Prostate gland (tissue), 2 donors: ENCODE measurements at regions of chr1 and their contacts with region 1.

Region 1: DNA sequence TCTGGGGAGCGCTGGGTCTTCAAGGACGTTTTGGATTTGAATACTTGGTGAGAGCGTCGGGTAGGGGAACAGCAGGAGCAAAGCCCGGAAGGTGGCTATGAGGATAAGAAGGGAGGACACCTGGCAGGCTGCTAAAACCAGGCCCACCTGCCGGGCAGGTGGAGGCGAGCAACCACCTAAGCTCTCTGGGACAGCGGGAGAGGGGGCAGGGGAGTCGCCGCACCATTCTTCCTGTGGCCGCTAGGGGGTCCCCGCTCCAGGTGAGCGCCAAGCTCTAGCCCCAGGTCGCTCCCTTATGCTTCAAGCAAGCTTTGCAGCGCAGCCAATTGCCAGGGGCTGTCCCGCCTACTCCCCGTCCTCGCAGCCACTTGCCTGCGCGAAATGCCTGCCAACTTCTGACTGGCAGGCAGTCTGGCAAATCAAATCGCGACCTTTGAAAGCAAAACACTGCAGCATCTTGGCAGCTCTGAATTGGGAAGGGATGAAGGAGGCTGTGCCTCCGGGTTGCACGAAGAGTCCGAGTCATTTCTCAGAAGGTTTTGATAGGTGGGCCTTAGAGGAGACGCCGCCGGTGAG is at the start of gene NIPAL3:
- DNase-seq: peak; percentile 98
- H3K4me3 ChIP-seq: peak within 1 kb of the TSS; percentile 54 to 57
- H3K27ac ChIP-seq: peak within 1 kb of the TSS; percentile 66 to 82
- H3K4me1 ChIP-seq: no peaks in the 10 kb centered on the region
- H3K27me3 ChIP-seq: no peaks in the 10 kb centered on the region
- CTCF ChIP-seq: peak; percentile 67 to 97 (median 92)
- POLR2A ChIP-seq: peak; percentile 74
- total RNA-seq, gene NIPAL3: 125 to 350 TPM

Region 2: GRCh38 chr1:24111996-24112779 is 303.2 kb before region 1 on chr1 and contains the start of gene MYOM3:
- intact Hi-C with region 1: no loop called
- DNase-seq: peak; percentile 66
- H3K4me3 ChIP-seq: no peak within 1 kb of the TSS
- H3K27ac ChIP-seq: peak within 1 kb of the TSS in 1 of 2 donors; percentile 7
- H3K4me1 ChIP-seq: no peaks in the 10 kb centered on the region
- H3K27me3 ChIP-seq: no peaks in the 10 kb centered on the region
- CTCF ChIP-seq: peak in 3 of 4 experiments; percentile 26 to 66 (median 62)
- POLR2A ChIP-seq: no peak
- total RNA-seq, gene MYOM3: 3.3 to 28.5 TPM

Region 3: DNA sequence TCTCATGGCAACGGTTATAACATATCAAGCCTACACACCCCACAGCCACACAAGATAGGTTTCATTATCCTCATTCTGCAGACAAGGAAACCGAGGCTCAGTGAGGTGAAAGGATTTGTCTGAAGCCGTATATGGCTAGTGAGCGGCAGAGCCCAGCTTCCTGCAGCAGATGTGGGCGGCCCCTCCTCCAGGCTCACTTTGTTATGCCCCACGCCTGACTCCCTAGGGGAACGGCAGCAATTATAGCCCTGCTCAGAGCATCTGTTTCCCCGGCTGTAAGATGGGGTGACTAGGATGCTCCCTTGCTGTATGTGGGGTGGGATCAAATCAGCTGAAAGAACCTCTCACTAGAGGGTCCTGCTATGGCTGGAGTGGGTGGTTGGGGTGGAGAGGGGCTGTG is 74.2 kb before region 1 on chr1:
- intact Hi-C with region 1: no loop called
- DNase-seq: no peak
- H3K4me3 ChIP-seq: no peak overlapping the region
- H3K27ac ChIP-seq: no peak overlapping the region
- H3K4me1 ChIP-seq: peaks cover 9% of the 10 kb centered on the region
- H3K27me3 ChIP-seq: no peaks in the 10 kb centered on the region
- CTCF ChIP-seq: no peak
- POLR2A ChIP-seq: no peak

Region 4: GRCh38 chr1:24555591-24556413 is 140.4 kb after region 1 on chr1 and contains the start of gene NCMAP:
- intact Hi-C with region 1: no loop called
- DNase-seq: peak; percentile 56
- H3K4me3 ChIP-seq: peak within 1 kb of the TSS; percentile 38 to 47
- H3K27ac ChIP-seq: peak within 1 kb of the TSS; percentile 65 to 70
- H3K4me1 ChIP-seq: no peaks in the 10 kb centered on the region
- H3K27me3 ChIP-seq: no peaks in the 10 kb centered on the region
- CTCF ChIP-seq: peak in 1 of 4 experiments; percentile 33
- POLR2A ChIP-seq: no peak
- total RNA-seq, gene NCMAP: 2.0 to 7.7 TPM

Region 5: GRCh38 chr1:24642481-24643361 is 227.3 kb after region 1 on chr1 and contains the start of gene SRRM1:
- intact Hi-C with region 1: loop called (anchors 2 kb)
- DNase-seq: peak; percentile 100
- H3K4me3 ChIP-seq: peak within 1 kb of the TSS; percentile 74 to 75
- H3K27ac ChIP-seq: peak within 1 kb of the TSS; percentile 96 to 99
- H3K4me1 ChIP-seq: no peaks in the 10 kb centered on the region
- H3K27me3 ChIP-seq: no peaks in the 10 kb centered on the region
- CTCF ChIP-seq: peak in 2 of 4 experiments; percentile 38 to 51
- POLR2A ChIP-seq: peak; percentile 98
- total RNA-seq, gene SRRM1: 119 to 147 TPM

Region 6: DNA sequence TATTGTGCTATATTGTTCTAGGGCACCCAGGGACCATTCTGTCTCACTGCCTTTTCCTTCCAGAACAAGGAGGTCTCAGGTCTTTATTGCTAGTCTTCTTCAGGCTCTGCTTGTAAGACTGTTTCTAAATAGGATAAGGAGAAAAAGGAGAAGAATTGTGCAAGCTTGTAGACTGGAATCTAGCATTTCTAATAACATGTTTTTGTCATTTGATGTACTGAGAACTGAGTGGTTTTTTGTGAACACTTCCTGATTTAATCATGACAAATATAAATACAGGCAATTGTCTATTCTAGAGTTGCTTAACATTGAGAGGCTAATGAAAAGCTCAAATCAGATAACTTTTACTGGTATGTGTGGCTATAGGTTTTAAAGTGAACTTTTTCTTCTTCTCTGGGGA is 407.5 kb after region 1 on chr1:
- intact Hi-C with region 1: loop called (anchors 10 kb)
- DNase-seq: no peak
- H3K4me3 ChIP-seq: no peak overlapping the region
- H3K27ac ChIP-seq: no peak overlapping the region
- H3K4me1 ChIP-seq: no peaks in the 10 kb centered on the region
- H3K27me3 ChIP-seq: no peaks in the 10 kb centered on the region
- CTCF ChIP-seq: no peak
- POLR2A ChIP-seq: no peak